ENCODE measurements at regions of chr11 and their contacts with region 1.

Region 1: DNA sequence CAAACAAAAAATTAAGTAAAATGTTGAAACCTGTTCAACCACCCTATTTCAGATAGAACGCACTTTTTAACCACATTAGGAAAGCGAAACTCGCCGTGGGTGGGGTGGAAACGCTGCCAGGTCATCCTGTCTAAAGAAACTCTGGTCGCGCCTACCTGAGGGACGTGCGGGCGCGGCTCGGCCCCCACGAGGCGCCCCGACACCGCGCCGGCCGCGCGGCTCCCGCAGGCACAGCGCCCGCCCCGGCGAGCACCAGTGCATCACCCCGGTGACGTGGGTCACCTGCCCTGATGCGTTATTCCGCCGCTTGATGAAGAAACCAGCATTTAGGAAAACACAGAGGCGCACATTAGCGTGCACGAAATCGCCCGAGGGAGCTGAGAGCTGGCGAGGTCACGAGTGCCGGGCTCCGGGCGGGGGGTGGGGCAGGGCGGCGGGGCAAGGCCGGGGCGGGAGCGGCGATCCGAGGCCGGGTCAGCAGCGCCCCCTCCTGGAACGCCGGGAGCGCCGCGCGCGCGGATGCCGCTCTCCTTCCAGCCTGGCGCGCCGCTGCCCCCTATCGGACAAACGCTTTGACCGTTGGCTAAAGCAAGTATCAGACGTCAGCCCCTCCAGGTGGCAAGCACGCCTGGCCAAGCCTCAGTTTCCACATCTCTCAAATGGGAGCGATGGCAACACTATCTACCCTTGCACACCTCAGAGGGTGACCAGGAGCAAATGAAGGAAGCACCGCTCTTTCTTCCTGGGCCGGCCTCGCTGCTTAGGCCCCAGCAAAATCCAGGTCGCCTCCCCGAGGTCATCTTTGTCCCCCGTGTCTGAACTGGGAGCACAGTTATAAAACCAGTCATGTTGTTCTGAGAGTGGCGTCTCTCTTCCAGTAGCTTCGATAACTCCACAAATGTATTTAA is 15.7 kb upstream of the SNX32 start:
- DNase-seq: peak; percentile 95
- H3K4me3 Mint-ChIP-seq: peak overlapping the region; percentile 69
- H3K27ac Mint-ChIP-seq: peak overlapping the region; percentile 46
- H3K4me1 Mint-ChIP-seq: peaks cover 10% of the 10 kb centered on the region
- H3K27me3 Mint-ChIP-seq: no peaks in the 10 kb centered on the region

Region 2: DNA sequence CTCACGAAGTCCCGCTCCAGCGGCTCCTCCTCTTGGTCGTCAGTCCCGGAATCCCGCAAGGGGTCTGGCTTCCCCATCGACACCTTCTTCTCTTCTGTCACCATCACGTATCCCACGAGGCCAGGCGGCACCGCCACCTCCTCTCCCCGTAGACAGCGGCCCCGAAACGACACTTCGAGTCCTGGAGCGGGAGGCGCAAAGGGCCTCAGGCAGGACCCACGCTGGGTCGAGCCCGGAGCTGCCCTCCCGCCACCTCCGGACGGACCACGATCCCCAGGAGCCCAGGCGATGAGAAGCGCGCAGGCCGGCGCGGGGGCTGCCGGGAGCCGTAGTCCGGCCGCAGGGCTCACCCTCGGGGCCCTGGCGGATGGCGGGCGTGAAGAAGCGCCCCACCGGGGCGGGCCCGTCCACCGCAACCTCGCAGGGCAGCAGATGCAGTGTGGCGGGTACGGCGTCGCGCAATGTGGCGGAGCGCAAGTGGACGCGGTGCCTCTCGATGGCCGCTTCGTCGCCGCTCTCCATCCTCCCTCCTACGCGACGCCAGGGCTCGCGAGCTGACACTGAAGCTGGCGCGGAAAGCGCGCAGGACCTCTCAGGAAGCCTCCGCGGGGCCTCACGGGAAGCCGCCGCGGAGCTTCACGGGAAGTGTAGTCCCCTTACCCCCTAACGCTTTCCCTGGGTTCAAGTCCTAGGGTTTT is 97.7 kb before region 1 on chr11 and contains the start of gene RNASEH2C:
- CTCF ChIA-PET with region 1: interaction called, 17 read pairs
- POLR2A ChIA-PET with region 1: interaction called, 3 read pairs
- intact Hi-C with region 1: no loop called
- DNase-seq: peak; percentile 89
- H3K4me3 Mint-ChIP-seq: peak within 1 kb of the TSS; percentile 98
- H3K27ac Mint-ChIP-seq: peak within 1 kb of the TSS; percentile 85
- H3K4me1 Mint-ChIP-seq: peaks cover 24% of the 10 kb centered on the region
- H3K27me3 Mint-ChIP-seq: no peaks in the 10 kb centered on the region
- total RNA-seq, gene RNASEH2C: 98.4 to 105 TPM

Region 3: DNA sequence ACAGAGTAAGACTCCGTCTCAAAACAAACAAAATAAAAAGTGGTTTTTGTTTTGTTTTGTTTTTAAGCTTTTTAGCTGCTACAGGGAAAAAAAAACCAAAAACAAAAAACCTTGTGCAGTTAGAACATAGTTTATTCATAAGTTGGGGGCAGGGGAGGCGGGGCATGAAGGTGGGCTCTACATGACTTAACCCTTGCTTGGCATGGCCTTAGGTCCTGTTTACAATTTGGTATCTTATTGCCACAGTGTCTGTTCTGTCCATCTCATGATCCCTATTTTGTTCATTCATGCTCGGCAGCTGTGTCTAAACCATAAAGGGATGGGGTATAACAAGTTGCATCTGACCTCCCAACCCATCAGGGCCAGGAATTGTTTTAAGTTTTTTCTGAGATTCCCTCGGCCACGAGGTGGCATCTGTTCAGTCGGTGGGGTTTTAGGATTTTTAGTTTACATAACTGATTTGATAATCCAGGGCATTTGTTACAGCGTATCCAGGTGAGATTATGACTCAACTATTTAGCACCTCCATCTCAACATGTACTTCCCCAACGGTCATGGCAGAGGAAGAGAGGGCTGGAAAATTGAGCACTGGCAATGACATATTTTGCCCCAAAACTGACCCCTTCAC is 44.2 kb before region 1 on chr11:
- CTCF ChIA-PET with region 1: interaction called, 126 read pairs
- POLR2A ChIA-PET with region 1: no interaction called
- intact Hi-C with region 1: no loop called
- DNase-seq: no peak
- H3K4me3 Mint-ChIP-seq: no peak overlapping the region
- H3K27ac Mint-ChIP-seq: no peak overlapping the region
- H3K4me1 Mint-ChIP-seq: peaks cover 15% of the 10 kb centered on the region
- H3K27me3 Mint-ChIP-seq: no peaks in the 10 kb centered on the region

Region 4: GRCh38 chr11:65791691-65792213 is 26.3 kb before region 1 on chr11:
- CTCF ChIA-PET with region 1: interaction called, 13 read pairs
- POLR2A ChIA-PET with region 1: no interaction called
- intact Hi-C with region 1: no loop called
- DNase-seq: peak; percentile 84
- H3K4me3 Mint-ChIP-seq: no peak overlapping the region
- H3K27ac Mint-ChIP-seq: no peak overlapping the region
- H3K4me1 Mint-ChIP-seq: peaks cover 17% of the 10 kb centered on the region
- H3K27me3 Mint-ChIP-seq: peaks cover 26% of the 10 kb centered on the region

Region 5: GRCh38 chr11:65833297-65834030 is 15.4 kb after region 1 on chr11 and contains the start of gene SNX32:
- CTCF ChIA-PET with region 1: interaction called, 19 read pairs
- POLR2A ChIA-PET with region 1: interaction called, 3 read pairs
- intact Hi-C with region 1: no loop called
- DNase-seq: peak; percentile 98
- H3K4me3 Mint-ChIP-seq: no peak within 1 kb of the TSS
- H3K27ac Mint-ChIP-seq: no peak within 1 kb of the TSS
- H3K4me1 Mint-ChIP-seq: peaks cover 21% of the 10 kb centered on the region
- H3K27me3 Mint-ChIP-seq: no peaks in the 10 kb centered on the region
- total RNA-seq, gene SNX32: 2.0 to 2.7 TPM

Region 6: GRCh38 chr11:65997286-65997685 is 179.2 kb after region 1 on chr11:
- CTCF ChIA-PET with region 1: no interaction called
- POLR2A ChIA-PET with region 1: no interaction called
- intact Hi-C with region 1: no loop called
- DNase-seq: no peak
- H3K4me3 Mint-ChIP-seq: no peak overlapping the region
- H3K27ac Mint-ChIP-seq: no peak overlapping the region
- H3K4me1 Mint-ChIP-seq: peaks cover 24% of the 10 kb centered on the region
- H3K27me3 Mint-ChIP-seq: no peaks in the 10 kb centered on the region